ENCODE measurements at regions of chr4 and their contacts with region 1.

Region 1: DNA sequence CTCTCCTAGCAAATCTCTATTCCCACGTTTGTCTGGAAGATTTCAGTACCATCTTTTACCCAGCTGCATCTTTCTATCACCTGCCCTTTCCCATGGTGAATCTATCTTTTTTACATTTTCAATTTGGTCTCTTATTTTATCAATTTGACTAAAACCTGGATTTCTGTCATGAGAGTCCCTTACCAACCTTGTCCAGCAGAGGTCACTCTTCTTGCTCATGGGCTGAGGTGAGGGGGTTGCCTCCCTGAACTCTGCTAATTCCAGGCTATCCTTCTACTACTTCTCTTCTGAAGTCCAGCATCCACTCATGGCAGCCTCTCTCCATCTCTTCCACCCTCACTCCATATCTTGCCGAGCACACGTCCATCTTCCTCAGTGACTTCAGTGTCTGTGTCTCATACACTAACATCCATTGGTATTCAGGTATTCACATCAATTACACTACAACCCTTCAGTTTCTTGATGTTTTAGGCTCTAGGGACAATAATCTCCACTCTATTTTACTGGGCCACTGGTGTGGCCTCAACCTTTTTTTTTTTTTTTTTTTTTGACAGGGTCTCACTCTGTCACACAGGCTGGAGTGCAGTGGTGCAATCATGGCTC is 17.8 kb upstream of the ZNF827 start:
- DNase-seq: no peak
- H3K4me3 ChIP-seq: no peak overlapping the region
- H3K27ac ChIP-seq: no peak overlapping the region
- H3K4me1 ChIP-seq: no peaks in the 10 kb centered on the region
- H3K27me3 ChIP-seq: no peaks in the 10 kb centered on the region
- CTCF ChIP-seq: peak in 3 of 4 experiments; percentile 36 to 53 (median 47)
- POLR2A ChIP-seq: no peak

Region 2: GRCh38 chr4:145847764-145848163 is 108.6 kb before region 1 on chr4:
- intact Hi-C with region 1: loop called (anchors 5 kb)
- DNase-seq: no peak
- H3K4me3 ChIP-seq: no peak overlapping the region
- H3K27ac ChIP-seq: no peak overlapping the region
- H3K4me1 ChIP-seq: no peaks in the 10 kb centered on the region
- H3K27me3 ChIP-seq: no peaks in the 10 kb centered on the region
- CTCF ChIP-seq: no peak
- POLR2A ChIP-seq: no peak